ENCODE measurements at regions of chr4 and their contacts with region 1.

Region 1: GRCh38 chr4:151276787-151277562 is at the start of gene PRSS48:
- DNase-seq: peak; percentile 79
- ATAC-seq: peak; percentile 55
- H3K4me3 Mint-ChIP-seq: no peak within 1 kb of the TSS
- H3K27ac Mint-ChIP-seq: no peak within 1 kb of the TSS
- H3K4me1 Mint-ChIP-seq: no peaks in the 10 kb centered on the region
- H3K27me3 Mint-ChIP-seq: peaks cover 3% of the 10 kb centered on the region
- total RNA-seq, gene PRSS48: not detected

Region 2: DNA sequence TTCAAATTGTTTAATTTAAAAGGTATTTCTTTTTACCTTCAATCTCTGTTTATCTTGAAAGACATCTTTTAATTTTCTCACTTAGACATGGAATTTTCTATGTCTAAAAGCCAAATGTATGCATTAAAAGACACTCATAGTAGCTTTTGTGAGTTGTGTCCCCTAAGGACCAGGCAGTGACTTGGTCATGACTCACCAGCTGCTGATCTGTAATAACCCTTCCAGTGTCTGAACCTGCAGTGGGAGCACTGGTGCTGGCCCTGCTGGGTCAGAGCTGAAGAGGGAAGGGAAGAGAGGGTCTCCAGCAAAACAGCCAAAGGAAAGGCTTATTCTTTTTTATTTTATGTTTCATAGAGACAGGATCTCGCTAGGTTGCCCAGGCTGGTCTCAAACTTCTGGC is 79.5 kb after region 1 on chr4:
- CTCF ChIA-PET with region 1: no interaction called
- POLR2A ChIA-PET with region 1: no interaction called
- intact Hi-C with region 1: loop called in 1 of 2 experiments (anchors 5 kb)
- DNase-seq: no peak
- ATAC-seq: no peak
- H3K4me3 Mint-ChIP-seq: no peak overlapping the region
- H3K27ac Mint-ChIP-seq: no peak overlapping the region
- H3K4me1 Mint-ChIP-seq: no peaks in the 10 kb centered on the region
- H3K27me3 Mint-ChIP-seq: peaks cover 14% of the 10 kb centered on the region

Region 3: GRCh38 chr4:151610229-151610628 is 333.3 kb after region 1 on chr4:
- CTCF ChIA-PET with region 1: interaction called, 3 read pairs
- POLR2A ChIA-PET with region 1: no interaction called
- intact Hi-C with region 1: loop called in 1 of 2 experiments (anchors 2 kb)
- DNase-seq: no peak
- ATAC-seq: no peak
- H3K4me3 Mint-ChIP-seq: no peak overlapping the region
- H3K27ac Mint-ChIP-seq: no peak overlapping the region
- H3K4me1 Mint-ChIP-seq: no peaks in the 10 kb centered on the region
- H3K27me3 Mint-ChIP-seq: peaks cover 4% of the 10 kb centered on the region

Measured in activated CD4-positive, alpha-beta T cell treated with anti-CD3 and anti-CD28 coated beads for 36 hours (primary cell).